ENCODE measurements at regions of chr2 and their contacts with region 1.

Region 1: GRCh38 chr2:240513549-240514287 is 44.1 kb downstream of the ANKMY1 start:
- DNase-seq: peak; percentile 72 to 89 (median 77)
- H3K4me3 ChIP-seq: no peak overlapping the region
- H3K4me3 Mint-ChIP-seq: peak overlapping the region in 3 of 7 donors; percentile 2 to 44 (median 43)
- H3K27ac ChIP-seq: no peak overlapping the region
- H3K27ac Mint-ChIP-seq: peak overlapping the region; percentile 0 to 93 (median 86)
- H3K4me1 ChIP-seq: peaks cover 11% of the 10 kb centered on the region
- H3K4me1 Mint-ChIP-seq: peaks cover 10 to 14% (median 12%) of the 10 kb centered on the region in 3 donors
- H3K27me3 ChIP-seq: no peaks in the 10 kb centered on the region
- H3K27me3 Mint-ChIP-seq: peaks cover 0 to 2% of the 10 kb centered on the region in 2 donors

Region 2: DNA sequence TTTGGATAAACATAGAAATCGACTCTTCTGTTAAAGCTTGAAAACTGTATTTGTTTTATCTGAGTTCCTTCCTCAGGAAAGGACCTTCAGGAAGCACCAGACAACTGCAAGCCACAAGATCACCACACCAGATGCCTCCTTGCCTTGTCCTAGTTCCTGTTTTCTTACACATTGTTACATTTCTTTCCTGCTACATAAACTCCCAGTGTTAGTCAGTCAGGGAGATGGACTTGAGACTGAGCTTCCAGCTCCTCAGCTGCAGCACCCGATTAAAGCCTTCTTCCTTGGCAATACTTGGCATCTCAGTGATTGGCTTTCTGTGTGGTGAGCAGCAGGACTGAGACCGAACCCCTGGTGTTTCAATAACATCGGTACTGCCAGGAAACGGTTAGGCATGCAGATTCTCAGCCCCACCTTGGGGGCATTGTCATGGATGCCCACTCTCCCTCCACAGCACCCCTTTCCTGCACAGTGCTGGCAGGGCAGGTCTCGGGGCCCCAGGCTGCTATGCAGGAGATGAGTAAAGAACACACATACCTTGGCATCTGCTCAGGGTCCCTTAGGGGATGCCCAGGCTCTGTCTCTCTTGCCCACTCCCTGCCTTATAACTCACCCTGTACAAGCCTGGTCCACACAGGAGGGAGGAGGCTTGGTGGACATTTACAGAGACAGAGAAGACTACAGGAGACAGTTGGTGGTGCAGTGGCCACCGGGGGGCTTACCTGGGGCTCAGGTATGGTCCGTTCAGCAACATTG is 11.4 kb after region 1 on chr2:
- CTCF ChIA-PET with region 1: interaction called, 11 read pairs
- POLR2A ChIA-PET with region 1: no interaction called
- DNase-seq: no peak
- H3K4me3 ChIP-seq: no peak overlapping the region
- H3K4me3 Mint-ChIP-seq: no peak overlapping the region
- H3K27ac ChIP-seq: no peak overlapping the region
- H3K27ac Mint-ChIP-seq: no peak overlapping the region
- H3K4me1 ChIP-seq: no peaks in the 10 kb centered on the region
- H3K4me1 Mint-ChIP-seq: peaks cover 6 to 8% (median 6%) of the 10 kb centered on the region in 3 donors
- H3K27me3 ChIP-seq: no peaks in the 10 kb centered on the region
- H3K27me3 Mint-ChIP-seq: no peaks in the 10 kb centered on the region

Region 3: GRCh38 chr2:240560480-240561326 is 47.0 kb after region 1 on chr2:
- CTCF ChIA-PET with region 1: interaction called, 39 read pairs
- POLR2A ChIA-PET with region 1: interaction called, 7 read pairs
- DNase-seq: peak; percentile 99 to 100 (median 100)
- H3K4me3 ChIP-seq: peak overlapping the region; percentile 63
- H3K4me3 Mint-ChIP-seq: peak overlapping the region; percentile 86 to 95 (median 90)
- H3K27ac ChIP-seq: peak overlapping the region; percentile 87
- H3K27ac Mint-ChIP-seq: peak overlapping the region; percentile 46 to 97 (median 90)
- H3K4me1 ChIP-seq: peaks cover 74% of the 10 kb centered on the region
- H3K4me1 Mint-ChIP-seq: peaks cover 71 to 86% (median 78%) of the 10 kb centered on the region in 3 donors
- H3K27me3 ChIP-seq: no peaks in the 10 kb centered on the region
- H3K27me3 Mint-ChIP-seq: no peaks in the 10 kb centered on the region

Region 4: DNA sequence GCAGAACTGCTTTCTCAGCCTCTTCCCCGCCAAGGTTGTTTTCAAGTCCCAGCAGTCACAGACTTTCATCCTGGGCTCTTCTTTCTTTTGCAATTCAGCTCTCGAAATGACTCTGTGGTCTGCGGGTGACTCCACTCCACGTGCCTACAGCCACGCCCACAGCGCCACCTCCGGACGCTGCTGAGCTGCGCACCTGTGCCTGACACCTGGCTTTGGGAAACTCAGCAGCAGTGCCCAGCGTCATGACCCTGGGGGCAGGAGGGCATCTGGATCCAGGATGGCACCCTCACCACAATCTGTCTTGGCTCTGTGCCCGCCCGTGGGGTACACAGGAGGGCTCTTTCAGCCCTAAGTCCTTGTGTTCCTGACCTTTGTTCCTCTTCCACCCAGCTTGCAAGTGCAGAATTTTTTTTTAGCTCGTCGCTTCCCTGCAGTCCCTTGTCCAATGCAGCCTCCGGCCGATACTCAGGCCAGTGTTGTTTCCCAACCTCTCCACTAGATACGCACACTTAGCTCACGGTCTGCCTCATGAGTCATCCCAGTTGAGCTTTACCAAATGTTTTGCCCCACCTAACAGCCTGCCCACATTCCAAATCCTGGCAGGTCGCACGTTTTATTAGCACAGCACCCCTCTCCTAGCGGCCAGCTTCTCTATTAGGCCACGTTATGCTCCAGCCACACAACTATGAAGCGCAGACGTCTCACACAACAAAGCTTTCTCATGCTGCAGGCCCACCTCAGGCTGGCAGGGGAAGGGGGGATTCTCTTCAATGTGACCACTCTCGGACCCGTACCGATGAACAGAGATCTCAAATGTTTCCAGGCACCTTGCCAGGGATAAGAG is 66.3 kb after region 1 on chr2:
- CTCF ChIA-PET with region 1: interaction called, 37 read pairs
- POLR2A ChIA-PET with region 1: interaction called, 7 read pairs
- DNase-seq: peak; percentile 70 to 89 (median 76)
- H3K4me3 ChIP-seq: no peak overlapping the region
- H3K4me3 Mint-ChIP-seq: peak overlapping the region in 6 of 7 donors; percentile 8 to 69 (median 56)
- H3K27ac ChIP-seq: no peak overlapping the region
- H3K27ac Mint-ChIP-seq: peak overlapping the region; percentile 59 to 91 (median 84)
- H3K4me1 ChIP-seq: peaks cover 29% of the 10 kb centered on the region
- H3K4me1 Mint-ChIP-seq: peaks cover 33 to 53% (median 49%) of the 10 kb centered on the region in 3 donors
- H3K27me3 ChIP-seq: no peaks in the 10 kb centered on the region
- H3K27me3 Mint-ChIP-seq: no peaks in the 10 kb centered on the region

Region 5: DNA sequence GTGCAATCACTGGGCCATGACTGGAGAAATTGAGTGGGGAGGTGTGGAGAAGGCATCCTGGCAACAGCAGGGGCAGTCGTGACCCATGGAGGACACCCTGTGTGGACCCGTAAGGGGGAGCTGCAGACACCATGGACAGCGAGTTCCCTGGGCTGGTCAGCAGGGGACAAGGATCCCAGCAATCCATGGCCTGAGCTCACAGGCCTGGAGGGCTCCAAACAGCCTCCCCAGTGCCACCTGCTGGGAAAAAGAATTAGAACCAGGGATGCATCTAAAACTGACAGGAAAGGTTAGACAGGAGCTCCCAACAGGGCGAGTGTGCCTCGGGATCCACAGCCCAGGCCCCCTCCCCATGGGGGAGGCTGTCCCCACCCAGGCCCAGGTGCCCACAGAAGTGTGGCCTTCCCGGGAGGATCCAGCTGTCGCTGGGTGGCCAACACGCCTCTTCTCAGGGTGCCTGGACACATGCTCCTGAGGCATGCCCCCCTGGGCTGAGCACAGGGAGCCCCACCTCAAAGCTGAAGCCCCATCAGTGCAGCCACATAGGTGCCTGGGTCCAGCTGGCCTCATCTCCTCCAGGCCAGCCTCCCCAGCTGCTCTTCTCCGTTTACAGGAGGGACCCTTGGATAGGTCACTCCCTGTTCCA is 326.8 kb after region 1 on chr2:
- CTCF ChIA-PET with region 1: interaction called, 26 read pairs
- POLR2A ChIA-PET with region 1: no interaction called
- DNase-seq: no peak
- H3K4me3 ChIP-seq: no peak overlapping the region
- H3K4me3 Mint-ChIP-seq: no peak overlapping the region
- H3K27ac ChIP-seq: no peak overlapping the region
- H3K27ac Mint-ChIP-seq: no peak overlapping the region
- H3K4me1 ChIP-seq: no peaks in the 10 kb centered on the region
- H3K4me1 Mint-ChIP-seq: no peaks in the 10 kb centered on the region
- H3K27me3 ChIP-seq: peaks cover 3% of the 10 kb centered on the region
- H3K27me3 Mint-ChIP-seq: peaks cover 3 to 12% of the 10 kb centered on the region in 2 donors

Measured in CD8-positive, alpha-beta memory T cell (primary cell).